GM10248 (cell line): ENCODE measurements at regions of chr22 and their contacts with region 1.

Region 1: DNA sequence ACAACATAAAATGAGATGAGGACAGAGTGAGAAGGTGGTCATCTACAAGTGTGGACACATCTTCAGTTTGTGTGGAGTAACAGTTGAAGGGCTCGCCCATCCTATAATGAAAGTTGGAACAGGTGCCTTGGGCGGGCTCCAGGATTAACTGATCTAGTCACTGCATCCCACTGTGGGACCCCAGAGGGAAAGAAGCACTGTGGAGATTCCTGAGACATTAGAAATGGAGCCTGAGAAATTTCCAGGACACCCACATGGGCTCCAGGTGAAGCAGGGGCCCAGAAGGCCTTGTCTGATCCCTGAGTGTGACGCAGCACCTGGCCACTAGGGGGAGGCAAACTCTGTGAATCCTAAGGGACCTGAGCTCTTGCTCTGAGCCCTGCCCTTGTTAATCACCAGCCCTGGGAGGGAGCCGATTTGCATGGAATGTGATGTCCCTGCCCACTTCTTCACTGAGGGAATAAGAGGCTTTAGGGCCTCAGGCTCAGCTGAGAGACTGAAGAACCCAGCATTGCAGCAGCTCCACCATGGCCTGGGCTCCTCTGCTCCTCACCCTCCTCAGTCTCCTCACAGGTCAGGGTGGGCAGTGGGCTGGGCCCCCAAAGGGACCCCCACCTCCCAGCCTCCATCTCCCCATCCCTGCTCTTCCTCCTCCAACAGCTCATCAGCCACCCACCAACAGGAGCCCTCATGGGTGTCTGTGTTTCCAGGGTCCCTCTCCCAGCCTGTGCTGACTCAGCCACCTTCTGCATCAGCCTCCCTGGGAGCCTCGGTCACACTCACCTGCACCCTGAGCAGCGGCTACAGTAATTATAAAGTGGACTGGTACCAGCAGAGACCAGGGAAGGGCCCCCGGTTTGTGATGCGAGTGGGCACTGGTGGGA is 98.4 kb downstream of the VPREB1 start:
- DNase-seq: peak; percentile 79
- CTCF ChIP-seq: peak; percentile 81

Region 2: DNA sequence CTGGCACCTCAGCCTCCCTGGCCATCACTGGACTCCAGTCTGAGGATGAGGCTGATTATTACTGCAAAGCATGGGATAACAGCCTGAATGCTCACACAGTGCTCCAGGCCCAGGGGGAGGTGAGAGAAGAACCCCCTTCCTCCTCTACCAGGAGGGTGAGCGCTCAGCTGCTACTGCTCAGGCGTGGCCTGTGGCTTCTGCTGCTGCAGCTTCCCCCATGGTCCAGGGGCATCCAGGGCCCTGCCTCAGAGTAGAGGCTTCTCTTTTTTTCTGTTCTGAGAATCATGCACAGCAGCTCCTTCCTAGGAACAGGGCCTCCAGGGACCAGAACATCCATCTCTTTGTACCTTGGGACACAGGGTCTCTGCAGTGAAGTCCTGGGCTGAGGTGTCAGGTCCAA is 15.2 kb before region 1 on chr22:
- CTCF ChIA-PET with region 1: interaction called, 14 read pairs
- POLR2A ChIA-PET with region 1: no interaction called
- DNase-seq: no peak
- CTCF ChIP-seq: no peak

Region 3: GRCh38 chr22:22527312-22527711 is 184.4 kb after region 1 on chr22:
- CTCF ChIA-PET with region 1: no interaction called
- POLR2A ChIA-PET with region 1: no interaction called
- DNase-seq: no peak
- CTCF ChIP-seq: no peak

Region 4: GRCh38 chr22:22587577-22588188 is 244.7 kb after region 1 on chr22:
- CTCF ChIA-PET with region 1: no interaction called
- POLR2A ChIA-PET with region 1: no interaction called
- DNase-seq: no peak
- CTCF ChIP-seq: no peak